ENCODE measurements at regions of chr2 and their contacts with region 1.

Region 1: DNA sequence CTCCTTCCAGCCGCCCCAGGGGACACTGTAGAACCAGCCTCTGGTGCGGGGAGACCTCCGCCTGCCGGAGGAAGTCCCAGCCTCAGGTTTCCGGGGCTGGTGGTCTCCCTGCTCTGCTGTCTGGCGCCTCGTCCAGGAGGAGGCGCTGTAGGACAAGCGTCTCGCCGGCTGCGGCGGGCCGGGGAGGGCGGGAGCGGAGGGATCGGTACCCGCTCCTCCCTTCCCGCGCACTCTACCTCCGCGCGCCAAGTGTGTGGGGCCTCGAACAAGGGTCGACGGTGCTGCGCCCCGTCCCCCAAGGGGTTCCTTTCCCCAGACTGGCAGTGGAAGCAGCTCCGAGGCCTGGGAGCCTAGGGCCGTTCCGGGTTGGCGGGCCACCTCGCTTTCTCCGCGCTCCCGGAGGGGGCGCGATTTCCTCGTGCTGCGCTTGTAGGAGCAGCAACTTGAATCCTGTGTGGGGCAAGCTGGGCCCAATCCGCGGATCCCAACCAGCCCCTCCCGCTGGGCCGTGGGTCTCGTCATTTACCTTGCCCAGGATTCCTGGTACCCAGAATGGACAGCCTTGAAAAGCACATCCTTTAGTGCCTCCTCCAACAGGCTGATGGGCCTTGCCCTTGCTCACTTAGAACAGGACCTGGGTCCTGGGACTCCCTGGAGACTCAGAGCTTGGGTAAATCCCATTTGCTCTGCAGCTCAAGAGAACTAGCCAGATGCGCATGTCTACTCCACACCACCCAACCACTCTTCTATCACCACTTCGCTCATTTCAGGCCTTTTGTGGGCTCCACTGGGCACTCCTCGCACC is 10.6 kb upstream of the HOXD4 start:
- DNase-seq: peak; percentile 80
- ATAC-seq: peak; percentile 94
- H3K4me3 Mint-ChIP-seq: peak overlapping the region; percentile 26
- H3K27ac Mint-ChIP-seq: no peak overlapping the region
- H3K4me1 Mint-ChIP-seq: peaks cover 13% of the 10 kb centered on the region
- H3K27me3 Mint-ChIP-seq: peaks cover 86% of the 10 kb centered on the region

Region 2: GRCh38 chr2:176151442-176152369 is 11.0 kb after region 1 on chr2 and contains the start of gene HOXD4:
- CTCF ChIA-PET with region 1: interaction called, 15 read pairs
- DNase-seq: no peak
- ATAC-seq: no peak
- H3K4me3 Mint-ChIP-seq: no peak within 1 kb of the TSS
- H3K27ac Mint-ChIP-seq: no peak within 1 kb of the TSS
- H3K4me1 Mint-ChIP-seq: no peaks in the 10 kb centered on the region
- H3K27me3 Mint-ChIP-seq: peaks cover 95% of the 10 kb centered on the region
- total RNA-seq, gene HOXD4: not detected

Region 3: DNA sequence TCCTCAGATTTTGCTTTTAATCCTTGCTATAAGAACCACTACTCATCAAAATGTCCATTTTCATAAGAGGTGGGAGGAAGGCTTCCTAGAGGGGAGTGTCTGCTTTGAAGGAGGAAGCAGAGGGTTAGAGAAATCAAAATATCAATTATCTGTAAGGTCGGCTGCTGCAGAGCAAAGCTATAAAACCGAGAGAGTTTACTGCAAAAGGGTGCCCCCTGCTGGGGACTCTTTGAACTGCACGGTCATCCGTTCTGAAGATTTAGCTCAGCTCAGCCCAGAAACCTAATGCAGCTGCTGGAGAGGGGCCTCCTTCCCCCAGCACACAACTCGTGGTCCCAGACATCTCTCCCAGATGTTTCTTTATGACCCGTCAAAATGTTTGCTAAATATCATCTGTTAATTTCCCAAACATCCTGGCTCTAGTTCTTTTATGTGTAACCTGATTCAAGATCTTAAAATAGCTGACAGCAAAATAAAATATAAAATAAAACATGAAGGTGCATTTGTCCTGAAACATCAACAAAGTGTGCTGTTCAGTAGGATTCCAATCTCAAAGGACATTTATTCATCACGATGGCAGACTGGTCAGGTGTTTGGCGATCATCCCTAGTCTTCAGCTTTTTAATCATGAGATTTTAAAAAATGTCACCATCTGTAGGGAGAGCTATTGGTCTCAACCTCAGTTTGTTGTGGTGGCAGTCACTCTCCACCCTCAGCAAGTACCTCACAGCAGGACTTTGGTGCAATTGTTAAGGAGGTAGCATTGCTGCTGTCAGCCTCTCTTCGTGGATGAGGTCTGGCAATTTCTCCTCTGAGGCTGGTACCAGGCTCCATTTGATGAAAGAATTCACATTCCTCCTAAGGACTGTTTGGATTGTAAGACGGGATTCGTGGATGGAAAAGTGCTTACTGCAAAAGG is 314.4 kb after region 1 on chr2:
- CTCF ChIA-PET with region 1: interaction called, 50 read pairs
- DNase-seq: peak; percentile 83
- ATAC-seq: peak; percentile 72
- H3K4me3 Mint-ChIP-seq: no peak overlapping the region
- H3K27ac Mint-ChIP-seq: no peak overlapping the region
- H3K4me1 Mint-ChIP-seq: peaks cover 1% of the 10 kb centered on the region
- H3K27me3 Mint-ChIP-seq: peaks cover 40% of the 10 kb centered on the region